ENCODE measurements at regions of chr15 and their contacts with region 1.

Region 1: GRCh38 chr15:36988947-36989346 is 111.4 kb downstream of the MEIS2 start:
- DNase-seq: no peak
- ATAC-seq: no peak
- H3K4me3 ChIP-seq: no peak overlapping the region
- H3K27ac ChIP-seq: peak overlapping the region in 5 of 10 donors; percentile 5 to 46 (median 27)
- H3K4me1 ChIP-seq: peaks cover 0 to 37% (median 16%) of the 10 kb centered on the region in 9 donors
- H3K27me3 ChIP-seq: no peaks in the 10 kb centered on the region
- CTCF ChIP-seq: no peak

Region 2: DNA sequence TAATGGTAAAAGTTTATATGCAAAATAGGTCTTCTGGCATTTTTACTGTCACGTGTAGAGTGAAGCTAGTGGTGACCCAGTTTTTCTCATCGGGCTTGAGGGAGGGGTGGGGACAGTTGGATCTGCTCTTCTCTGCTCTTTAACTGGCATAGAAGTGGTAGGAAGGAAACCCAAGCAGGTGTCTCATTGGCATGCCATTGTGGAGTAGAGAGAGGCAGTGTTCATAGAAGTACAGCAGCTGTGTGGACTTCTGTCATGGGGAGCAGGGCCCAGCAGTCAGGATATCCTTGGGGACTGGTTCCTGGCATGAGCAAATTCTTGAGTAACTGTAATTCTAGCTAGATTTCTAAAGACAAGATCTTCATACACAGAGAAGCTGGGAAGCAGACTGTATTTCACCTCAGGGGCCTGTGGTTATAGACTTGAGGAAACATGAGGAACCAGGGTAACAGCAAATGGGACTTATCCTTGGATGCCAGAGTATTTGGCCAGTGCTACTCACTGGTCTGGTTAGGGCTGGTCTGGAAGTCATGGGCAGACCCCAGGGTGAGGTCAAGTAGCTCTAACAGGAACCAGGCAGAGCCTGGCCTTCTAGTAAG is 366.7 kb before region 1 on chr15:
- intact Hi-C with region 1: no loop called
- DNase-seq: no peak
- ATAC-seq: peak in 7 of 8 donors; percentile 7 to 61 (median 37)
- H3K4me3 ChIP-seq: no peak overlapping the region
- H3K27ac ChIP-seq: peak overlapping the region in 3 of 10 donors; percentile 7 to 23 (median 18)
- H3K4me1 ChIP-seq: peaks cover 0 to 16% (median 7%) of the 10 kb centered on the region in 9 donors
- H3K27me3 ChIP-seq: no peaks in the 10 kb centered on the region
- CTCF ChIP-seq: no peak

Region 3: GRCh38 chr15:36911322-36911944 is 77.5 kb before region 1 on chr15:
- intact Hi-C with region 1: no loop called
- DNase-seq: no peak
- ATAC-seq: peak in 1 of 8 donors; percentile 52
- H3K4me3 ChIP-seq: no peak overlapping the region
- H3K27ac ChIP-seq: no peak overlapping the region
- H3K4me1 ChIP-seq: peaks cover 0 to 45% (median 25%) of the 10 kb centered on the region in 9 donors
- H3K27me3 ChIP-seq: no peaks in the 10 kb centered on the region
- CTCF ChIP-seq: no peak

Region 4: DNA sequence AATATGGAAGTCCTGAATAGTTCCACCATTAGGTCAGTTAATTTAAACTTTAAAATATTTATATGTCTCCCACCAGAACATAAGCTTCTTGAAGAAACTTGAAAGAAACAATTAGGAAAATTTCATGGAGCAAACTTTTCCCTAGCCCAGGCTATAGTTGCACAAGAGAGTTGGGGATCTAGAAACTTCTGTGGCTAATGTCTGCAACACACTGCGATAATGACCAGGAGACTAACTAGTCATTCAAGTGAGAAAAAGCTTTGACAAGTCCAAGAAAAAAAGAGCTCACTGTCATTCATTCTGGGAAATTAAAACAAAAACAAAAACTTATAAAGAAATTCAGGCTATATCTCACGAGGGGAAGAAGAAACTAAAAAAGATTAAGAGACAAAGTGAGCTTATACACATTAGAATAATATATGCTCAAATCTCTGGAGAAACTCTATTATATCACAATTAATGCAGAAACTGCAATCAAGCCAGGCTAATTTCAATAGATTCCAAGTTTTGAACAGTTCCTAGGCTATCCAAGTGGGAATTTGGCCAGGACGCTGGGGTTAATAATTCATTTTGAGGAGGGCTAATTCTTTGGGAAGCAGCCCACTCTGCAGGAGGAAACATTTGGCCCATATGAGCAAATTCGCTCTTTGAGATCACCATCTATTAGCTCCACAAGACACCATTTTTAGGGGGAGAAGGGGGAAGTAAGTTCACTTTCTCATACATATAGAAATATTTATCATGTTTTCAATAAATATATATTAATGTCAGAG is 23.2 kb before region 1 on chr15:
- intact Hi-C with region 1: loop called in 1 of 10 experiments (anchors 1 kb)
- DNase-seq: no peak
- ATAC-seq: peak in 1 of 8 donors; percentile 40
- H3K4me3 ChIP-seq: no peak overlapping the region
- H3K27ac ChIP-seq: peak overlapping the region in 2 of 10 donors; percentile 11 to 51
- H3K4me1 ChIP-seq: peaks cover 0 to 46% (median 22%) of the 10 kb centered on the region in 9 donors
- H3K27me3 ChIP-seq: no peaks in the 10 kb centered on the region
- CTCF ChIP-seq: no peak